ENCODE measurements at regions of chr20 and their contacts with region 1.

Region 1: DNA sequence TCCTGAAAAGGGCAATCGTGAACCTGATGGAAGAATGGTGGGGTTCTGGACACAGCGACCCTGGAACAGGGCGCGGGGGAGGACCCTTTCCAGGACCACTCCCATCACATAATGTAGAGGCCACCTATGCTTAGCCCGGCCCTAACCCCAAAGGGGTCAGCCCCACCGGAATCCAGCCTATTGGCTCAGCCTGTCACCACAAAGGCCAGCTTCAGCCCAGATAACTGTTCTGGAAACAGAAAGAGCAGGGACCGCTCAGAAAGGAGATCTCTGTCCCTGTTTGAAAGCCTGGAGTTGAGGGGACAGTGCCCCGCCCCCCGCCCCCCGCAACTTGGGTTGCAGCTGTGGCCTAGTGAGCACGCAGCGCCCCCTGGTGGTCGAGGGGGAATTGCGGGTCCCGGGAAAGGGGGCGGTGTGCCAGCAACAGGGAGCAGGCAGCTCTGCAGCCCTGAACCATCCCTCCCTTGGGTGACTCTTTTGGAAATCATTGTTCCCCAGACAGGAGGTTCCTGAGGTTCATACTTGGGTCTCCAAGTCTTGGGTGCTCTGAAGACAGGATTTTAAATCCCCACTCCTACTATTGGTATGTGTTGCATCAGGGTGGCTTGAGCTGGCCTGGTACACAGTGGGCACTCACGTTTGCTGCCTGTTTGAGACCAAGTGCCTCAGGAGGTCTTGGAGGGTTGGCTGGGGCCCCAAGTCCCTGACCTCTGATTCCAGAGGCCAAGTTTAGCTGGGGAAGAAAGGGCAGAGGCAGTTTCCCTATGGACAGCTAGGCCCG is 1.5 kb downstream of the SIGLEC1 start:
- DNase-seq: peak; percentile 33 to 99
- H3K4me3 ChIP-seq: no peak overlapping the region
- H3K27ac ChIP-seq: no peak overlapping the region
- H3K4me1 ChIP-seq: no peaks in the 10 kb centered on the region
- H3K27me3 ChIP-seq: no peaks in the 10 kb centered on the region; a peak in 1 of 7 replicates
- CTCF ChIP-seq: peak; percentile 88 to 98 (median 91)
- EP300 ChIP-seq: no peak
- POLR2A ChIP-seq: no peak
- RAD21 ChIP-seq: peak; percentile 88 to 93

Region 2: DNA sequence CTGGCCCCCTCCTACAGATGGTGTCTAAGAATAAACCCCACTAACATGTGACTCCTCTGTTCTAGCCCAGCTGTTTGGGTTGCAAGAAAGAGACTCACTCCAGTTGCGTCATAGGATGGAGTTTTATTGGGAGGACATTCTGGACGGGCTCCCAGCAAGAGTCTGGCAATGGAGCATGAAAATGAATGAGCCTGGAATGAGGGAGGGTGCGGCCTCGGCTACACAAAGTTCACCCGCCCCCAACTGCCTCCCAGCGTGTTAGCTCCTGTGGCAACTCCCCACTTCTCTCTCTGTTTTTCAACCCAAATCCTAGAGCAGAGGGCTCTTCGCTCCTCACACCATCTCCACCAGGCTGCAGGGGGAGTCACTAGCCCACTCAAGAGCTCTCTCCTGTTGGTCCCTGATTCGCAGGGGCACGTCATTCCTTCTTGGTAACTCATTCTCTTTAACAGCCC is 24.0 kb before region 1 on chr20:
- CTCF ChIA-PET with region 1: interaction called, 1,432 read pairs
- POLR2A ChIA-PET with region 1: no interaction called
- DNase-seq: no peak
- H3K4me3 ChIP-seq: no peak overlapping the region
- H3K27ac ChIP-seq: no peak overlapping the region
- H3K4me1 ChIP-seq: peaks cover 3 to 10% (median 5%) of the 10 kb centered on the region in 4 experiments
- H3K27me3 ChIP-seq: peaks cover 0 to 9% (median 7%) of the 10 kb centered on the region in 4 experiments; a peak in 6 of 7 replicates
- CTCF ChIP-seq: peak; percentile 5 to 14 (median 8); a peak in 3 of 4 replicates
- EP300 ChIP-seq: no peak
- POLR2A ChIP-seq: no peak
- RAD21 ChIP-seq: peak in 1 of 2 experiments; percentile 42; a peak in 2 of 4 replicates

Region 3: GRCh38 chr20:3732327-3733118 is 21.6 kb after region 1 on chr20 and contains the start of gene HSPA12B:
- CTCF ChIA-PET with region 1: interaction called, 37 read pairs
- POLR2A ChIA-PET with region 1: no interaction called
- DNase-seq: peak in 1 of 2 experiments; percentile 72
- H3K4me3 ChIP-seq: peak within 1 kb of the TSS; percentile 33 to 59 (median 41)
- H3K27ac ChIP-seq: no peak within 1 kb of the TSS
- H3K4me1 ChIP-seq: peaks cover 0 to 19% (median 15%) of the 10 kb centered on the region in 4 experiments; a peak in 5 of 7 replicates
- H3K27me3 ChIP-seq: peaks cover 1 to 26% (median 22%) of the 10 kb centered on the region in 4 experiments; a peak in 6 of 7 replicates
- CTCF ChIP-seq: no peak
- EP300 ChIP-seq: no peak
- POLR2A ChIP-seq: no peak
- RAD21 ChIP-seq: no peak
- total RNA-seq, gene HSPA12B: 4.3 and 4.9 TPM in 2 replicates

Region 4: GRCh38 chr20:3739054-3739925 is 28.4 kb after region 1 on chr20:
- CTCF ChIA-PET with region 1: interaction called, 308 read pairs
- POLR2A ChIA-PET with region 1: no interaction called
- DNase-seq: no peak
- H3K4me3 ChIP-seq: no peak overlapping the region
- H3K27ac ChIP-seq: no peak overlapping the region
- H3K4me1 ChIP-seq: peaks cover 0 to 19% (median 9%) of the 10 kb centered on the region in 4 experiments; a peak in 6 of 7 replicates
- H3K27me3 ChIP-seq: peaks cover 0 to 4% (median 0%) of the 10 kb centered on the region in 4 experiments; a peak in 2 of 7 replicates
- CTCF ChIP-seq: no peak
- EP300 ChIP-seq: no peak
- POLR2A ChIP-seq: no peak
- RAD21 ChIP-seq: no peak

Region 5: GRCh38 chr20:3767427-3768341 is 56.8 kb after region 1 on chr20 and contains the start of gene ADISSP:
- CTCF ChIA-PET with region 1: interaction called, 16 read pairs
- POLR2A ChIA-PET with region 1: interaction called, 4 read pairs
- DNase-seq: peak; percentile 97
- H3K4me3 ChIP-seq: peak within 1 kb of the TSS; percentile 74 to 94 (median 88)
- H3K27ac ChIP-seq: peak within 1 kb of the TSS; percentile 66; the same call in 1 of the 2 replicates
- H3K4me1 ChIP-seq: peaks cover 3 to 15% (median 6%) of the 10 kb centered on the region in 4 experiments; a peak in 6 of 7 replicates
- H3K27me3 ChIP-seq: no peaks in the 10 kb centered on the region
- CTCF ChIP-seq: peak in 2 of 3 experiments; percentile 13 to 35; a peak in 2 of 4 replicates
- EP300 ChIP-seq: no peak
- POLR2A ChIP-seq: peak in 1 of 2 experiments; percentile 71; a peak in 2 of 3 replicates
- RAD21 ChIP-seq: no peak
- total RNA-seq, gene ADISSP: 111 and 117 TPM in 2 replicates

Measured in H1 (cell line).